ENCODE measurements at regions of chr4 and their contacts with region 1.

Region 1: GRCh38 chr4:176377780-176378179 is 58.0 kb downstream of the SPCS3 start:
- DNase-seq: no peak
- ATAC-seq: no peak
- H3K4me3 Mint-ChIP-seq: no peak overlapping the region
- H3K27ac Mint-ChIP-seq: no peak overlapping the region
- H3K4me1 Mint-ChIP-seq: no peaks in the 10 kb centered on the region
- H3K27me3 Mint-ChIP-seq: peaks cover 3% of the 10 kb centered on the region

Region 2: DNA sequence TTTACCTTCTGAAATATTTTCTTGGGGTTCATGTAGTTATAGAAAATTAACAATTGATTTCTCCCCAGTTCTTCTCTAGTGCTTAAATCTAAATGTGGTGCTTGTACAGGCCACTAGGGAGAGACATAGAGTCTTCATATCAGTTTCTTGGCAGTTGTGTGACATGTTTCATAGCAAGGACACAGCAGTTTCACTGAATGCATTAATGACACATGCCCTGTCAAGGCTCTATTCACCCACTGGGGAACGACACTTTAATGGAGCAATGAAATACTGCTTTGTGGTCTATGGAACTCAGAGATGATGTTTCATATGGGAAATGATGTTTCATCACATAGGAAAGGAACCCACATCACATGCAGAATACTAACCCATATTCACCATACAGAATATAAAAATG is 412.2 kb after region 1 on chr4:
- CTCF ChIA-PET with region 1: interaction called, 3 read pairs
- POLR2A ChIA-PET with region 1: no interaction called
- intact Hi-C with region 1: loop called in 1 of 2 experiments (anchors 5 kb)
- DNase-seq: no peak
- ATAC-seq: peak; percentile 74
- H3K4me3 Mint-ChIP-seq: no peak overlapping the region
- H3K27ac Mint-ChIP-seq: no peak overlapping the region
- H3K4me1 Mint-ChIP-seq: peaks cover 3% of the 10 kb centered on the region
- H3K27me3 Mint-ChIP-seq: peaks cover 37% of the 10 kb centered on the region

Region 3: GRCh38 chr4:176833400-176834175 is 455.8 kb after region 1 on chr4:
- CTCF ChIA-PET with region 1: no interaction called
- POLR2A ChIA-PET with region 1: no interaction called
- intact Hi-C with region 1: no loop called
- DNase-seq: no peak
- ATAC-seq: no peak
- H3K4me3 Mint-ChIP-seq: no peak overlapping the region
- H3K27ac Mint-ChIP-seq: no peak overlapping the region
- H3K4me1 Mint-ChIP-seq: no peaks in the 10 kb centered on the region
- H3K27me3 Mint-ChIP-seq: no peaks in the 10 kb centered on the region

Measured in activated CD4-positive, alpha-beta T cell treated with anti-CD3 and anti-CD28 coated beads for 36 hours (primary cell).